ENCODE measurements at regions of chr1 and their contacts with region 1.

Region 1: GRCh38 chr1:198681831-198682759 is 43.3 kb downstream of the PTPRC start:
- DNase-seq: peak in 1 of 2 experiments; percentile 8
- H3K4me3 ChIP-seq: no peak overlapping the region
- H3K4me3 Mint-ChIP-seq: no peak overlapping the region
- H3K27ac Mint-ChIP-seq: no peak overlapping the region
- H3K4me1 ChIP-seq: no peaks in the 10 kb centered on the region
- H3K4me1 Mint-ChIP-seq: no peaks in the 10 kb centered on the region
- H3K27me3 ChIP-seq: no peaks in the 10 kb centered on the region
- H3K27me3 Mint-ChIP-seq: no peaks in the 10 kb centered on the region
- CTCF ChIP-seq: no peak

Region 2: GRCh38 chr1:197521118-197521739 is 1160.9 kb before region 1 on chr1:
- CTCF ChIA-PET with region 1: no interaction called
- POLR2A ChIA-PET with region 1: no interaction called
- intact Hi-C with region 1: loop called (anchors 2 kb)
- DNase-seq: peak in 1 of 2 experiments; percentile 47
- H3K4me3 ChIP-seq: no peak overlapping the region
- H3K4me3 Mint-ChIP-seq: no peak overlapping the region
- H3K27ac Mint-ChIP-seq: no peak overlapping the region
- H3K4me1 ChIP-seq: no peaks in the 10 kb centered on the region
- H3K4me1 Mint-ChIP-seq: no peaks in the 10 kb centered on the region
- H3K27me3 ChIP-seq: no peaks in the 10 kb centered on the region
- H3K27me3 Mint-ChIP-seq: no peaks in the 10 kb centered on the region
- CTCF ChIP-seq: peak; percentile 64 to 70

Region 3: DNA sequence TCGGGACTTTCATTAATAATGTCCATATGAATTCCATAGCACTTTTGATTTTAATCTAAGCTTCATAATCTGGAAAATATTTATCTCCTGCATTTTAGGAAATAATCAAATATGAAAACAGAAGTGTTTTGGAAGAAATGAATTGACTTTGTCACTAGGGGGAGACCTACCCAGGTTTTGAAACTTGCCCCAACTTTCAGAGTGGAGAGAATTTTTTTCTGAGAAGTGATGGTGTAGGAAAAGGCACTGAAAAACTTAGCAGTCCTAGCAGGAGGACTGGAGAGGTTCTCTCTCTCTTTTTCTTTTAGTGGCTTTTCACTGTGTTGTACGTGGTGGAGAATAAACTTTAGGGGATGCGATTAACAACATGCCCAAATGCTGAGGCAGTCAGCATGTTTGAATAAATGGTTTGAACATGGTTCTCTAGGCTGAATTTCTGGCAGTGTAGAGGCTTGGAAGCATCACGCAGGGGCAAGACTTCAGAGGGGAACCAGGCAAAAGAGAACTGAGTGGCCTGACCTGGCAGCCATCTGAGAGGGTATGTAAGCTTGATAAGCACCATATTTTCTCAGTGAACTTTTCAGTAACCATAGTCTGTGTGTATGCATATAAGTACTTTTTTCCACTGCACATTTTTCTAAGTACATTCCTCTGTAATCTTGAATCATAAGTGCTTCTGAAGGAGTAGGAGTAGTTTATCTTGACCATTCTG is 593.6 kb before region 1 on chr1:
- CTCF ChIA-PET with region 1: no interaction called
- POLR2A ChIA-PET with region 1: no interaction called
- intact Hi-C with region 1: loop called (anchors 1 kb)
- DNase-seq: peak in 1 of 2 experiments; percentile 50
- H3K4me3 ChIP-seq: no peak overlapping the region
- H3K4me3 Mint-ChIP-seq: peak overlapping the region; percentile 52
- H3K27ac Mint-ChIP-seq: no peak overlapping the region
- H3K4me1 ChIP-seq: peaks cover 6% of the 10 kb centered on the region; the same call in 1 of the 2 replicates
- H3K4me1 Mint-ChIP-seq: peaks cover 12% of the 10 kb centered on the region
- H3K27me3 ChIP-seq: no peaks in the 10 kb centered on the region
- H3K27me3 Mint-ChIP-seq: no peaks in the 10 kb centered on the region
- CTCF ChIP-seq: peak; percentile 67 to 70

Region 4: GRCh38 chr1:198340139-198340538 is 342.0 kb before region 1 on chr1:
- CTCF ChIA-PET with region 1: no interaction called
- POLR2A ChIA-PET with region 1: no interaction called
- intact Hi-C with region 1: loop called (anchors 10 kb)
- DNase-seq: no peak
- H3K4me3 ChIP-seq: no peak overlapping the region
- H3K4me3 Mint-ChIP-seq: no peak overlapping the region
- H3K27ac Mint-ChIP-seq: no peak overlapping the region
- H3K4me1 ChIP-seq: no peaks in the 10 kb centered on the region
- H3K4me1 Mint-ChIP-seq: no peaks in the 10 kb centered on the region
- H3K27me3 ChIP-seq: no peaks in the 10 kb centered on the region
- H3K27me3 Mint-ChIP-seq: peaks cover 2% of the 10 kb centered on the region
- CTCF ChIP-seq: no peak

Region 5: DNA sequence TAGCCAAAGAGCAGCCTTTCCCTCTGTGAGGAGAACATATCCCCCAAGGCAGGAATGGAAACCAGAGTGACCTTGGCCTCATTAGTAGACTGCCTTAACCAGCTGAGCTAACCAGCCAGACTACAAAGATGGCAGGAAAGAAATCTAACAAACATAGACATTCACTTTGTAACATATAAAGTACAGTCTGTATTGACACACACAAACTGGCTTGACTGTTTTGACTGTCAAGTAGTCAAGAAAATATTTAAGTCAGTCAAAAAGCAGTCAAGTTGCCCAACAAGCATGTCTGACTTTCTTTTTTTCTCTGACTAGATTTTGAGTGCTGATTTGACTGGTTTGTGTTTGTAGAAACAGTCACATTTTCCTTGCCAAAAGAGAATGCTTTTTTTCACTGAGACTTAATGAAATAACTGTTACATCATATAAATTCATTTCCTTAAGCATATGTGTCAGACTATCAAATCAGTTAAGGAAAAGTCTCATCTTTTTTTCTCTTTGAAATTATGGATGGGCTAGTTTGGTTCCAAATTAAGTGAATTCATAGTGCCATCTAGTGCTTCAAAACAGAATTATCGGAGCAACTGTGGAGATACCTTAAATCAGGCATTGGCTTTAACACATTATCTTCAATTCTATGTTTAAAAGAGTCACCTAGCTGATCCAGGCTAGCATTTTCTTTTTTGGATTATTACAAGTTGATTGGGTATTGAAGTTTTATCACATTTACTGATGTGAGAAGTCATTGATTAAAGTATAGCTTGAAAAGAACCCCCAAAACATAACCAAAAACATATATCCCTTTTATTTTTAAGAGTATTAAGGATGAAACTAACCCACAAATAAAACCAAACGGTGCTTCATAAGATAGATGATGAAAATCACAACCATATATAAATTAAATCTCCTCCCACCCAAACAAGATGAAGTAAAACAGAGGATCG is 216.6 kb before region 1 on chr1:
- CTCF ChIA-PET with region 1: interaction called, 3 read pairs
- POLR2A ChIA-PET with region 1: no interaction called
- intact Hi-C with region 1: loop called (anchors 1 kb)
- DNase-seq: peak in 1 of 2 experiments; percentile 50
- H3K4me3 ChIP-seq: no peak overlapping the region
- H3K4me3 Mint-ChIP-seq: no peak overlapping the region
- H3K27ac Mint-ChIP-seq: no peak overlapping the region
- H3K4me1 ChIP-seq: no peaks in the 10 kb centered on the region
- H3K4me1 Mint-ChIP-seq: no peaks in the 10 kb centered on the region
- H3K27me3 ChIP-seq: no peaks in the 10 kb centered on the region
- H3K27me3 Mint-ChIP-seq: peaks cover 2% of the 10 kb centered on the region
- CTCF ChIP-seq: peak; percentile 53 to 58